A673 (cell line): ENCODE measurements at regions of chr16 and their contacts with region 1.

Region 1: DNA sequence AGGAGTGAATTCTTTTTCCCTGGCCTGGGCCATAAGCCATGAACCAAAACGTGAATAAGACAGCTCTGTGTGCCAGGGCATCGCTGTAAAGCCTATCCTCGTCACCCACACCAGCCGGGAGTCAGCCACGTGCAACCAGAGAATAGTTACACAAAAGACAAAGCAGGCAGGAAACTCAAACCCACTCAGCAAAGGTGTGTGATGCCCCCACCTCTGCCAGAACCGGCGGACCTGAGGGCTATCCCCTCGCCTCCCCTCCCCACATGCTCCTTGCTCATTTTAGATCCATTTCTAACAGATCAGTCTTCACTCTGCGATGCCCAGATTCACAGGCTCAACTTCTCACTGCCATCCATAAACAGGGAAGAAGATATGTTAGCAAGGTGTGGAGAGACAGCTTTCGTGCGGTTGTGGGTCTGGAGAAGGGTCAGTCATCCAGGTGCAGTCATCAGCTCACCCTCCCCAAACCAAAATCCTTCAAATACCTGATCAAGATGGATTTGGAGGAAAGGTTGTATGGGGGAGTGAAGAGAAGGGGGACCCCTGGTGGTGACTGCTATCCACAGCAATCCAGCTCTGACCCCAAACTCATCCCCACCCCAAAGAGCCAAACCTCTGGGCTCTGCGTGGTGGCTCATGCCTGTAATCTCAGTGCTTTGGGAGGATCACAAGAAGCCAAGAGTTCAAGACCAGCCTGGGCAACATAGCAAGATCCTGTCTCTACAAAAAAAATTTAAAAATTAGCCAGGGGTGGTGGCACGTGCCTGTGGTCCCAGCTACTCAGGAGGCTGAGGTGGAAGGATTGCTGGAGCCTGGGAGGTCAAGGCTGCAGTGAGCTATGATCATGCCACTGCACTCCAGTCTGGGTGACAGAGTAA is 219.2 kb downstream of the C16orf78 start:
- DNase-seq: peak; percentile 52
- H3K4me3 ChIP-seq: no peak overlapping the region
- H3K27ac ChIP-seq: no peak overlapping the region
- H3K4me1 ChIP-seq: peaks cover 17% of the 10 kb centered on the region
- H3K27me3 ChIP-seq: no peaks in the 10 kb centered on the region
- CTCF ChIP-seq: peak; percentile 78

Region 2: GRCh38 chr16:48676836-48677235 is 915.9 kb before region 1 on chr16:
- CTCF ChIA-PET with region 1: no interaction called
- POLR2A ChIA-PET with region 1: no interaction called
- intact Hi-C with region 1: no loop called
- DNase-seq: peak; percentile 21
- H3K4me3 ChIP-seq: no peak overlapping the region
- H3K27ac ChIP-seq: no peak overlapping the region
- H3K4me1 ChIP-seq: no peaks in the 10 kb centered on the region
- H3K27me3 ChIP-seq: peaks cover 12% of the 10 kb centered on the region
- CTCF ChIP-seq: no peak

Region 3: GRCh38 chr16:49407873-49408550 is 184.8 kb before region 1 on chr16:
- CTCF ChIA-PET with region 1: interaction called, 6 read pairs
- POLR2A ChIA-PET with region 1: no interaction called
- intact Hi-C with region 1: loop called (anchors 2 kb)
- DNase-seq: peak; percentile 87
- H3K4me3 ChIP-seq: no peak overlapping the region
- H3K27ac ChIP-seq: no peak overlapping the region
- H3K4me1 ChIP-seq: no peaks in the 10 kb centered on the region
- H3K27me3 ChIP-seq: no peaks in the 10 kb centered on the region
- CTCF ChIP-seq: peak; percentile 89

Region 4: GRCh38 chr16:49491771-49492761 is 100.7 kb before region 1 on chr16:
- CTCF ChIA-PET with region 1: interaction called, 8 read pairs
- POLR2A ChIA-PET with region 1: no interaction called
- intact Hi-C with region 1: loop called (anchors 5 kb)
- DNase-seq: peak; percentile 49
- H3K4me3 ChIP-seq: no peak overlapping the region
- H3K27ac ChIP-seq: no peak overlapping the region
- H3K4me1 ChIP-seq: peaks cover 12% of the 10 kb centered on the region
- H3K27me3 ChIP-seq: no peaks in the 10 kb centered on the region
- CTCF ChIP-seq: peak; percentile 88

Region 5: DNA sequence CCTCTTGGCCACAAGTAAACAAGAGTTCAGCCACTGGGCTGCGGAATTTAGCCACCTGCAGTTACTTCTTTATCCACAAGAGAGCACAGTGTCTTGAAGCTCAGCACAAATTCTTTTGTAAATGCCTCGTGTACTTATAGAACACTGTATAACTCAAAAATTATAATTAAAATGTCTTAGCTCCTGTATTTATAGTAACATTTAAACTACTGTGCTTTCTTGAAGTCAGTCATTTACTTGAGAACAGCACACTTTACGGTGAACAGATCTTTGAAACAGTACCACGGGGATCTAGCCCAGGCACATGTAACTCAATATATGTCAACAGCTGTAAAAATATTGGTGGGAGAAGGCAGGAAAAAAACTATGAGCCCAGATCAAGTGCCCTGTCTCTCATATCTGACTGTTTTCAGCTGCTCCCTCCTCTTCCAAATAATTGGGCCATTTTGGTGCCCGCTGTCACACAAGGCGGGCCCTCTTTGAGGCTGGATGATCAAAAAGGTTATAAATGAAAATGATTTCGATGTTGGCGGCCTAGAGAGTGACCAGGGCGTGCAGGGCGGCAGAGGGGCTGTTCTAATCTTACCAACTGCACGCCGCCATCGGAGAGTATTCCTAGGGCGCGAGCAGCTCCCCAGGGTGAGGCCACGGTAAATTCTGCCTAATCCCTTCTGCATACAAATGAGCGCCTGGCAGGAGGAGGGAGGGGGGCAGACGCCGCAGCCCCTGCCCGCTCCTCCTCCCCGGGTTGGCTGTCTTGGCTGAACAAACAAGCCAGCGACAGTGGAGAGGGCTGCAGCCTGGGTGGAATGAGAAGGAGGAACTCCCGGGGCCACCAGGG is 36.0 kb before region 1 on chr16:
- CTCF ChIA-PET with region 1: interaction called, 13 read pairs
- POLR2A ChIA-PET with region 1: interaction called, 3 read pairs
- intact Hi-C with region 1: loop called (anchors 2 kb)
- DNase-seq: peak; percentile 82
- H3K4me3 ChIP-seq: peak overlapping the region; percentile 27
- H3K27ac ChIP-seq: peak overlapping the region; percentile 74
- H3K4me1 ChIP-seq: peaks cover 45% of the 10 kb centered on the region
- H3K27me3 ChIP-seq: no peaks in the 10 kb centered on the region
- CTCF ChIP-seq: peak; percentile 80

Region 6: DNA sequence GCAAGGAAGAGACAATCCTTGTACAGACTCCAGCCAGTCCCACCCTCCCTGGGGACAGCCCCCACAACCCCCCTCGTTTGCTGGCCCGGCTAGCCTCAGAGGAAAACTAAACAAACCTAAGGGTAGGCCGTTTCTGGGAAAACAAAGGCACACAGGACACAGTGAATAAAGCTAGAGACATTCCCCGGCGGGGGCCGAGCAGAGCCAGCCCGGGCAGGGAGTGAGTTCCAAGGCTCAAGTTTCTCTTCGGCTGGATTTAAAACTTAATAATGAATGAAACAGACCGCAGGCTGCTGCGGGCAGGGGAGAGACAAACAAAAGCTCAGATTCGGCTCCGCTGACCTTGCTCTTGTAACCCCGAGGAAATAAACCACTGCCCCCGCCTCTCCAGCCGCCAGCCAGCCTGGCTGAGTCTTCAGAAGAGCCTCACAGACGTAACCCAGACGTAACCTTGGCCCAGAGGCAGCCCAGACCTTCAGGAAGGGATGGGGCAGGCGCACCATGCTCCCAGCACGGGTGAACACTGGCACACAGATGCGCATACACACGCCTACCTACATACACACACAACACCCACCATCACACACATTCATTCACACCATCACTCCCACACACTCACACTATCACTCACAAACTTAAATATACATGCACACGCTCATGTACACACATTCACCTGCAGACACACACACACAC is 47.1 kb after region 1 on chr16:
- CTCF ChIA-PET with region 1: no interaction called
- POLR2A ChIA-PET with region 1: interaction called, 14 read pairs
- intact Hi-C with region 1: no loop called
- DNase-seq: no peak
- H3K4me3 ChIP-seq: no peak overlapping the region
- H3K27ac ChIP-seq: no peak overlapping the region
- H3K4me1 ChIP-seq: peaks cover 8% of the 10 kb centered on the region
- H3K27me3 ChIP-seq: no peaks in the 10 kb centered on the region
- CTCF ChIP-seq: no peak

Region 7: GRCh38 chr16:49701789-49702494 is 109.2 kb after region 1 on chr16:
- CTCF ChIA-PET with region 1: interaction called, 4 read pairs
- POLR2A ChIA-PET with region 1: no interaction called
- intact Hi-C with region 1: loop called (anchors 5 kb)
- DNase-seq: peak; percentile 99
- H3K4me3 ChIP-seq: peak overlapping the region; percentile 43
- H3K27ac ChIP-seq: peak overlapping the region; percentile 99
- H3K4me1 ChIP-seq: peaks cover 65% of the 10 kb centered on the region
- H3K27me3 ChIP-seq: no peaks in the 10 kb centered on the region
- CTCF ChIP-seq: no peak

Region 8: GRCh38 chr16:49952386-49952785 is 359.6 kb after region 1 on chr16:
- CTCF ChIA-PET with region 1: no interaction called
- POLR2A ChIA-PET with region 1: no interaction called
- intact Hi-C with region 1: no loop called
- DNase-seq: peak; percentile 83
- H3K4me3 ChIP-seq: no peak overlapping the region
- H3K27ac ChIP-seq: no peak overlapping the region
- H3K4me1 ChIP-seq: no peaks in the 10 kb centered on the region
- H3K27me3 ChIP-seq: no peaks in the 10 kb centered on the region
- CTCF ChIP-seq: no peak